ENCODE measurements at regions of chr13 and their contacts with region 1.

Region 1: GRCh38 chr13:110471833-110472162 is 89.7 kb downstream of the RAB20 start:
- DNase-seq: peak; percentile 40 to 68
- ATAC-seq: peak; percentile 33 to 67
- H3K4me3 ChIP-seq: no peak overlapping the region
- H3K27ac ChIP-seq: peak overlapping the region in 1 of 4 donors; percentile 35
- H3K4me1 ChIP-seq: peaks cover 0 to 4% of the 10 kb centered on the region in 2 donors
- H3K27me3 ChIP-seq: no peaks in the 10 kb centered on the region
- CTCF ChIP-seq: no peak
- POLR2A ChIP-seq: no peak

Region 2: DNA sequence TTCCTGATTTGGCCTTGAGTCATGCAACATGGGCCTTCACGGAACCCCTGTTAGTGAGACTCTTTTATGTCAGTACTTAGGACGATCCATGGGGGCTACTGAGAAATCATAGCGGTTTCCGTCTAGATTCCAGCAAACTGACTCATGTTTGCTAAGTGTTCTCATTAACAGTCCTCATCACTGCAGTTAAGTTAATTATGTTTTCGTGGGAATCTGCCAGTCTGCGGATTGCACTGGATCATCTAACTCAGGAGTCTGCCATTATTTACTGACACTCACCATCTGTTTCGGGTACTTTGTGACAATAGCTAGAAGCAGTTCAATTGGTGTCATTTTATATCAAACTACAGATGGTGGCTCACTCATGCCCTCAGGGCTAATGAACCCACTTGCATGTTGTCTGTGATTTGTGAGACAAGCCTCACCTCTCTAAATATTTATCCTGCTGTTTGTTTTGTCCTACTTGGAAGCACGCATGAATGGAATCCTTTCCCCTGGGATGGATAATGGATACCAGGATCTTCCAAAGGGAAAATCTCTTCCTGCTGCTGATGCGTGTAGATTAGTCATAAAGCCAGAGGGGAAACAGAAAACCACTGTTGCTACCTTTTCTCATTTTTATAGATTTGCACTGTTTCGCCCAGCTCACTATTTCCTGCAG is 28.0 kb after region 1 on chr13:
- in situ Hi-C with region 1: no loop called
- intact Hi-C with region 1: loop called (anchors 2 kb)
- DNase-seq: no peak
- ATAC-seq: no peak
- H3K4me3 ChIP-seq: no peak overlapping the region
- H3K27ac ChIP-seq: peak overlapping the region in 2 of 4 donors; percentile 76 to 85
- H3K4me1 ChIP-seq: peaks cover 5 to 10% of the 10 kb centered on the region in 2 donors
- H3K27me3 ChIP-seq: no peaks in the 10 kb centered on the region
- CTCF ChIP-seq: no peak
- POLR2A ChIP-seq: no peak

Region 3: GRCh38 chr13:110520431-110521295 is 48.9 kb after region 1 on chr13:
- in situ Hi-C with region 1: no loop called
- intact Hi-C with region 1: no loop called
- DNase-seq: peak; percentile 77 to 89
- ATAC-seq: peak; percentile 83 to 87
- H3K4me3 ChIP-seq: no peak overlapping the region
- H3K27ac ChIP-seq: peak overlapping the region; percentile 67 to 78 (median 73)
- H3K4me1 ChIP-seq: peaks cover 10 to 27% of the 10 kb centered on the region in 2 donors
- H3K27me3 ChIP-seq: no peaks in the 10 kb centered on the region
- CTCF ChIP-seq: no peak
- POLR2A ChIP-seq: peak; percentile 14 to 38

Measured in gastrocnemius medialis (tissue), 4 donors.